Activated CD4-positive, alpha-beta T cell treated with anti-CD3 and anti-CD28 coated beads, Interleukin-2, amount 10 ng/mL, durations not matched to agents 24 days and 14 days (primary cell): ENCODE measurements at regions of chr15 and their contacts with region 1.

Region 1: DNA sequence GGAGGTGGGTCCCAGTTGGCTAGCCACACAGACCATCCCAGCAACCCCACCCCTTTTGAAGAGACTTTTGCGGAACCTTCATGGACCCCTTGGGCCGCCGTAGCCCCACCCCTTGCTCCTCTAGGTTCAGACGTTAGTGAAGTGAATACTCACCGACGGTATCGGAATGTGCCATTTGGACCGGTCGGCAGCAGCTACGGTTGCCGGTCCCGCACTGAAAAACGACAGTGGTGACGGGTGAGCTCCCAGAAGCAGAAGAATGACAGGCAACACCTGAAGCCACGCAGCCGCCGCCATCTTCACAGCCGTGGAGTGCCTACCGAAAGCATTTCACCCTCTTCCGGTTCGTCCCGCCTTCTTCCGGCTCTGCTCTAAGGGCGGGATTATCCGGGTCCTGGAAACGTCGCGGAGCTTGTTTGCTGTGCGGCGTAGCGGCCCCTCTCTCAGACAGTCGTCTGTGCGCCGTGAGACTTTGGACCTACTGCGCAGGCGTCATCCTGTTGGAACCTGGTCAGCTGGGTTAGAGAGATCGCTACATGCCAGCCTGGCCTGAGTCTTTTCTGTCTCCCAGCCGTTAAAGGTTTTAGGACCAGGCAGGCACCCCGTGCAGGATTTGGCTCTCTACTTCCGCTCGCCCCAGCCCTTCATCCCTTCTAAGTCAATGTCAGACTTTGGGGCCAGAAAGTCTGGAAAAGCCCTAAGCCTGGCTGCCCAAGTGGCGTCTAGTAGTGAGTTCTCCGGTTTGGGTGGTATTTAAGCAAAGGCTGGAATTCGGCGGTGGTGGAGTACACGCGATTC is at the starts of genes GANC and TMEM87A:
- DNase-seq: peak; percentile 99
- H3K4me3 Mint-ChIP-seq: peak within 1 kb of the TSS; percentile 95
- H3K27ac Mint-ChIP-seq: peak within 1 kb of the TSS; percentile 99
- H3K4me1 Mint-ChIP-seq: peaks cover 39% of the 10 kb centered on the region
- H3K27me3 Mint-ChIP-seq: no peaks in the 10 kb centered on the region
- total RNA-seq, gene GANC: 15.0 and 17.6 TPM in 2 replicates
- total RNA-seq, gene TMEM87A: 37.1 and 39.1 TPM in 2 replicates

Region 2: GRCh38 chr15:41936649-41937567 is 336.4 kb before region 1 on chr15:
- intact Hi-C with region 1: loop called (anchors 1 kb)
- DNase-seq: peak; percentile 94
- H3K4me3 Mint-ChIP-seq: peak overlapping the region; percentile 75
- H3K27ac Mint-ChIP-seq: peak overlapping the region; percentile 100
- H3K4me1 Mint-ChIP-seq: peaks cover 70% of the 10 kb centered on the region
- H3K27me3 Mint-ChIP-seq: no peaks in the 10 kb centered on the region

Region 3: DNA sequence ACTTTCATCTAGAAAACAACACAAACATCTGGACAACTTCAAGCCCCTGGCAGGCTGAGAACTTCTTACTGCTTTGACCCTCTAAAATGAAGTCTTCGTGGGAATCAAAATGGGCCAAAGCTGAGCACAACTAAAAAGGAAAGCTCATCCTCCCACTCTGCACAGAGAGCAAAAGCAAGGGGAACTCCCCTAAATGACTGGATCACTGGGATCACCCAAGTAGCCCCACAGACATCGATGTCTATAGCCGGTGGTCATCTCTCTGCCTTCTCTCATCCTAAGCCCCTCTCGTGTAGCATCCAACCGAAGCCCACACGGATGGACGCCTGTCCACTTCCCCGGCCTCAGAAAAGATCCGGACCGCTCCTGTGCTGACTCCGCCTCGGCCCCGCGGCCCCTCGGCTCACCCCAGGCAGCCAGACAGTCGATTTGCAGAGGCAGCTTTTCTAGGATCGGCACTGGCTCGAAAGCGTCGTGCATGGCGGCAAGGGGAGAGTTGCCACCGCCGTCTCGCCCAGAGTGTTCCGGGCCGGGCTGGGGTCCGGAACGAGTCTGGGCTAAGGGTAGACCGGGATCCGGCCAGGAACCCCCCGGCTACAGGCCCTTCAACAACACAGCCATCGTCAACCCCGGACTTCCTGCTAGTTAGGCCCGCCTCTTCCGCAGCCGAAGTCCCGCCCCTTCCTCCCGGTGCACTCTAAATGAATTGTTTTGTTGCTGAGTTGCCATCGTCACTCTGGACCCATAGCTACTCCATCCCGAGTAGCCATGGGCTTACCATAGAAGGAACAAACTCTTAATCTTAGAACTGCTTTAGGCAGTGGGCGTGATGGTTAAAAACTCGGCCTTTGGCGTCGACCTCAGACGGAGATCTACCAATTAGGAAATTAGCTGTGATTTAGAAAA is 65.4 kb before region 1 on chr15 and contains the start of gene VPS39:
- intact Hi-C with region 1: loop called (anchors 2 kb)
- DNase-seq: peak; percentile 96
- H3K4me3 Mint-ChIP-seq: peak within 1 kb of the TSS; percentile 98
- H3K27ac Mint-ChIP-seq: peak within 1 kb of the TSS; percentile 98
- H3K4me1 Mint-ChIP-seq: peaks cover 28% of the 10 kb centered on the region
- H3K27me3 Mint-ChIP-seq: no peaks in the 10 kb centered on the region
- total RNA-seq, gene VPS39: 58.0 TPM in 2 replicates

Region 4: GRCh38 chr15:42495361-42496212 is 222.3 kb after region 1 on chr15 and contains the start of gene SNAP23:
- intact Hi-C with region 1: loop called (anchors 1 kb)
- DNase-seq: peak; percentile 96
- H3K4me3 Mint-ChIP-seq: peak within 1 kb of the TSS; percentile 97
- H3K27ac Mint-ChIP-seq: peak within 1 kb of the TSS; percentile 95
- H3K4me1 Mint-ChIP-seq: peaks cover 62% of the 10 kb centered on the region
- H3K27me3 Mint-ChIP-seq: no peaks in the 10 kb centered on the region
- total RNA-seq, gene SNAP23: 74.0 and 84.5 TPM in 2 replicates

Region 5: GRCh38 chr15:43105778-43106485 is 832.6 kb after region 1 on chr15 and contains the start of gene UBR1:
- intact Hi-C with region 1: loop called (anchors 5 kb)
- DNase-seq: peak; percentile 97
- H3K4me3 Mint-ChIP-seq: peak within 1 kb of the TSS; percentile 99
- H3K27ac Mint-ChIP-seq: peak within 1 kb of the TSS; percentile 94
- H3K4me1 Mint-ChIP-seq: peaks cover 42% of the 10 kb centered on the region
- H3K27me3 Mint-ChIP-seq: no peaks in the 10 kb centered on the region
- total RNA-seq, gene UBR1: 31.6 and 34.3 TPM in 2 replicates